ENCODE measurements at regions of chr6 and their contacts with region 1.

Region 1: DNA sequence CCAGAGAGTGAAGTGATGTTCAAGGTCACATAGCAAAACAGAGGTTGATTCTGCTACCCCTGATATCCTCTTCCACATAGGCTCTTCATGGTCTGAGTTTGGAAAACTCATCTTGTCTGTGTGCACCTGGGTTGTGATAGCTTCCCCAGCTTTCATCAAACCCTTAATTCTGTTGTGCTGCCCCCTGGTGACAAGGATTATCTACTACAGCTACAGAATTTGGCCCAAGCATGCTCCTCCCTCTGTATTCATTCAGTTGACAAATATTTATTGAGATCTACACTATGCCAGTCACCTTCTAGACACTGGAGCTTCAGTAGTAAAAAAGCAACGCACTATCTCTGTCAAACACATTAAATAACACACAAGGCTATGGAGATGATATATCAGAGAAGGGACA is 50.4 kb downstream of the SMPDL3A start:
- DNase-seq: no peak

Region 2: GRCh38 chr6:122631571-122632225 is 207.8 kb before region 1 on chr6:
- intact Hi-C with region 1: no loop called
- DNase-seq: no peak

Region 3: DNA sequence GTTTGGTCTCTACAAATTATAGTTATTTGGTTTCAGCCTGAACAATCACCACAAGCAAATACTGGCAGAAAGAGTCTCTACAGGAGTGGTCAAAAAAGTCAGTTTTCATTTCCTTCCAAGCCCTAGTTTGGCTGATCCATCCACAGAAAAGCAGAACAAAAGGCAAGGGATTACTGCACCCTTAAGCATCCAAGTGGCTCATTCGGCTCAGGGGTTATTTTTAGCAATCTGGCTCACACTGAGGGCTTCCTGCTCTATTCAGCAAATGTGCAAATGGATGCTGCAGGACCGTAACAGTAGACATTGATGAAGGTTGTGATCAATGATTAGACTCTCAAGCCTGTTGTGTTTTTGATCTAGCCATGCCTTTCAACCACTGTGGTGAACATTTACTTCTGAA is 122.1 kb before region 1 on chr6:
- intact Hi-C with region 1: no loop called
- DNase-seq: no peak

Region 4: DNA sequence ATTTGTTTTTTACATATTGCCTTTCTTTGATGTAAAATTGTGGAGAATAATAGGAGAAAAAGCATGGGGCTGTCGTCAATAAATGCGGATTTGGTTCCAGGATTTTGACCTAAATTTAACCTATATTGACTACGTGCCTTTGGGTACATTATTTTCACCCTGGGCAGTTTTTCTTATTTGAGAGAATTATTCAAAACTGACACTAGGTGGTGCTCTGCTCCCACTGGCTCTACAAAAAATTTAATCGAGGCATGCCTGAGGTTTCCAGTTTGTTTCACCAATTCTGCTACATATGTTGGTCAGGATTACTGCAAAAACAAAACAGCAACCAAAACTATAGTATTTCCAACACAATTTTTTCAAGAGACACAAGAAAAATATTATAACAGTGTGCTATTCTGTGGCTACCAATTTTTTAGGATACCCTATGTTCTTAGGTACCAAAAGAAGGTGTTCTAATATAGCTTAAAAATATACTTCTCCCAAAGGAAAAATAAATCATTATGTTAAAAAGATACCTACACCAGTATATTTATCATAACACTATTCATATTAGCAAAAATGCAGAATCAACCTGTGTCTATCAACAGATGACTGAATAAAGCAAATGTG is 108.6 kb before region 1 on chr6:
- intact Hi-C with region 1: loop called (anchors 5 kb)
- DNase-seq: no peak

Region 5: DNA sequence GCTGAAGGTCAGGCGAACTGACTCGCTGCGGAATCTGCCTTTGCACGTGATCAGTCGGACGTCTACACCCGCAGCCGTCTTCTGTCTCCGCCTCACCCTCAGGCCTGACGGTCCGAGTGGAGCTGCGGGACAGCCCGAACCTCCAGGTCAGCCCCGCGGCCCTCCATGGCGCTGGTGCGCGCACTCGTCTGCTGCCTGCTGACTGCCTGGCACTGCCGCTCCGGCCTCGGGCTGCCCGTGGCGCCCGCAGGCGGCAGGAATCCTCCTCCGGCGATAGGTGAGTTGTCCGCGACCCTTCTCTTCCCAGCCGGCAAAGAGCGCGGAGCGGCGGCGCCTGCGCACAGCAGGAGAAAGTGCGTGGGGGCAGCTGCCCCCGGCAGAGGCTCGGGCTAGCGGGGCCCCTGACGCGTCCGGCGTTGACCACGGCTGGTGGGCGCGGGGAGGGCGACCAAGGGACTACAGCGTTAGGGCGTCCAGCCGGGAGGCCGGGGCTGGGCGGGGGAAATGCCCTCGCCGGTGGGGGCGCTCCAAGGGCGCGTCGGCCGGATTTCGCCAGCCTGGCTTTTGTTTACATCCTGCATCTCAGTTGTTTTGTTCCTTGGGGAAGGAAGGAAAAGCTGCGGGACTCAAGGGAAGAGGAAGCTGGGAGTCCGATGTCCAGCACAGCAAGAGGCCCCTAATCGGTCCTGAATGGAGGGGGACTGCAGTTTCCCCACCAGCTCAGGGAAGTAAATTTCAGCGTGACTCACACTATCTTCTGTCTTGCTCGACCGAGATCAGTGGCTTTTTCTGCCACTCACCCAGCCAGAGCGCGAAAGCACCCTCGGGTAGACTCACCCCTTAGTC is 50.1 kb before region 1 on chr6 and contains the start of gene SMPDL3A:
- intact Hi-C with region 1: no loop called
- DNase-seq: peak; percentile 91
- total RNA-seq, gene SMPDL3A: 2.6 TPM

Measured in cardiac septum (tissue), 1 donor.